PC-9 (cell line): ENCODE measurements at regions of chr10 and their contacts with region 1.

Region 1: GRCh38 chr10:97714048-97714371 is 480 bp downstream of the MARVELD1 start:
- DNase-seq: peak in 1 of 2 experiments; percentile 46
- H3K4me3 ChIP-seq: peak overlapping the region; percentile 67
- H3K27ac ChIP-seq: peak overlapping the region; percentile 54
- H3K4me1 ChIP-seq: peaks cover 46% of the 10 kb centered on the region
- H3K27me3 ChIP-seq: no peaks in the 10 kb centered on the region
- CTCF ChIP-seq: no peak

Region 2: DNA sequence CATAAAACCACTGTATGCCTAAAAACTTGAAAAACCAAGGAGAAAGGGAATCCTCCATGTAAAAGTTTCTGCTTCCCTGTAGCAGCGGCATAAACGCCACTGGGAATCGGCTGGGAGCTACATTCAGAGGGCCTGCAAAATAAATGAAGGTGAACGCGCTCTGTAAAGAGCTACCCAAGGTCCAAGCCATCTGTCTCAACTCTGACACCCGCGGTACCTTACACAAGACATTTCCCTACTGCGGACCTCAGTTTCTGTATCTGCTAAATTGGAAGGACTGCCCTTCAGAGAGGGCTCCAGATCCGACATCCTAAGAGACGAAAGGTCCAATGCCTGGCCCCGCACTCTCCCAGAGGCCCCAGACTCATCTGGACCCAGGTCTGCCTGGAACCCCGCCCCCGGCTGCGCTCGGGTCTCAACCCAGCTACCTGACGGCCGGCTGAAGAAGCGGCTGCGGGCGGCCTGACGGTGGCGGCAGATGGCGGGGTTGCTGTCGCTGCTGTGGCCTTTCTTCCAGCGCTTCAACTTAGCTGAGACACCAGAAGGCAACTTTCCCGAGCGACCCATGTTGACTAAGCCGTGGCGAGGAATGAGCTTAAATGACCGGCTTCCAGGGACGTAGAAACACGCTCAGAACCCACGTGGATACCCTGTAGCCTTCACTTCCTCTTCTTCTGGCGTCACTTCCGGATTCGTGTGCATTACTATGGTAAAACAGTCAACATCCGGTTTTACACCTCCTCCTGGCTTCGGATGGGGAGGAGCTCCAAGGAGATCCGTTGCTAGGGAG is 313.1 kb before region 1 on chr10 and contains the start of gene RRP12:
- CTCF ChIA-PET with region 1: no interaction called
- POLR2A ChIA-PET with region 1: no interaction called
- intact Hi-C with region 1: loop called (anchors 10 kb)
- DNase-seq: peak; percentile 71 to 92
- H3K4me3 ChIP-seq: peak within 1 kb of the TSS; percentile 97
- H3K27ac ChIP-seq: peak within 1 kb of the TSS; percentile 61
- H3K4me1 ChIP-seq: no peaks in the 10 kb centered on the region
- H3K27me3 ChIP-seq: no peaks in the 10 kb centered on the region
- CTCF ChIP-seq: no peak
- total RNA-seq, gene RRP12: 22.6 and 34.3 TPM in 2 replicates

Region 3: DNA sequence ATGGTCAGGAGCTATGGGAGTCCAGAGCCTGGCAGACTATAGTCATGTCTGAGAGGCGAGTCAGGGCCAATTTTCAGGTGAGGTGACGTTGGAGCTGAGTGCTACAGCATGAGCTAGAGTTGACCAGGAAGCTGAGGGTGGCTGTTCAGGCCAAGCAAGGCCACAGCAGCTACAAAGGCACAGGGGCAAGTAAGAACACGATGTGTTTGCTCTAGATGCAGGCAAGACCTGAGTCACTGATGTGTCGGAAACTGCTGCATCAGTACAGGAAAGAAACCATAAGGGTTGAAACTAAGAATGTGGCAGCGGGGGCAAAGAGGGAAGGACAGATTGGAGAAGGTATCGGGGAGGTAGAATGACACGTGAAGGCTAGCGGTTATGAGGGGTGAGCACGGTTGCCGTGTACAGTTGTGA is 301.1 kb before region 1 on chr10:
- CTCF ChIA-PET with region 1: no interaction called
- POLR2A ChIA-PET with region 1: interaction called, 27 read pairs
- intact Hi-C with region 1: loop called (anchors 10 kb)
- DNase-seq: peak; percentile 47 to 81
- H3K4me3 ChIP-seq: no peak overlapping the region
- H3K27ac ChIP-seq: peak overlapping the region; percentile 50
- H3K4me1 ChIP-seq: peaks cover 10% of the 10 kb centered on the region
- H3K27me3 ChIP-seq: no peaks in the 10 kb centered on the region
- CTCF ChIP-seq: no peak

Region 4: GRCh38 chr10:97632949-97633884 is 80.8 kb before region 1 on chr10 and contains the start of gene MORN4:
- CTCF ChIA-PET with region 1: no interaction called
- POLR2A ChIA-PET with region 1: no interaction called
- intact Hi-C with region 1: no loop called
- DNase-seq: peak; percentile 72 to 84
- H3K4me3 ChIP-seq: peak within 1 kb of the TSS; percentile 83
- H3K27ac ChIP-seq: no peak within 1 kb of the TSS
- H3K4me1 ChIP-seq: no peaks in the 10 kb centered on the region
- H3K27me3 ChIP-seq: no peaks in the 10 kb centered on the region
- CTCF ChIP-seq: no peak
- total RNA-seq, gene MORN4: 10.0 and 10.6 TPM in 2 replicates

Region 5: GRCh38 chr10:97686962-97687784 is 26.8 kb before region 1 on chr10 and contains the start of gene AVPI1:
- CTCF ChIA-PET with region 1: interaction called, 3 read pairs
- POLR2A ChIA-PET with region 1: interaction called, 7 read pairs
- intact Hi-C with region 1: loop called (anchors 2 kb)
- DNase-seq: peak; percentile 91 to 97
- H3K4me3 ChIP-seq: peak within 1 kb of the TSS; percentile 81
- H3K27ac ChIP-seq: peak within 1 kb of the TSS; percentile 71
- H3K4me1 ChIP-seq: peaks cover 54% of the 10 kb centered on the region
- H3K27me3 ChIP-seq: no peaks in the 10 kb centered on the region
- CTCF ChIP-seq: no peak
- total RNA-seq, gene AVPI1: 20.5 and 22.4 TPM in 2 replicates

Region 6: GRCh38 chr10:97701438-97702069 is 12.5 kb before region 1 on chr10:
- CTCF ChIA-PET with region 1: interaction called, 26 read pairs
- POLR2A ChIA-PET with region 1: interaction called, 3 read pairs
- intact Hi-C with region 1: no loop called
- DNase-seq: peak in 1 of 2 experiments; percentile 29
- H3K4me3 ChIP-seq: no peak overlapping the region
- H3K27ac ChIP-seq: no peak overlapping the region
- H3K4me1 ChIP-seq: no peaks in the 10 kb centered on the region
- H3K27me3 ChIP-seq: no peaks in the 10 kb centered on the region
- CTCF ChIP-seq: peak; percentile 74

Region 7: DNA sequence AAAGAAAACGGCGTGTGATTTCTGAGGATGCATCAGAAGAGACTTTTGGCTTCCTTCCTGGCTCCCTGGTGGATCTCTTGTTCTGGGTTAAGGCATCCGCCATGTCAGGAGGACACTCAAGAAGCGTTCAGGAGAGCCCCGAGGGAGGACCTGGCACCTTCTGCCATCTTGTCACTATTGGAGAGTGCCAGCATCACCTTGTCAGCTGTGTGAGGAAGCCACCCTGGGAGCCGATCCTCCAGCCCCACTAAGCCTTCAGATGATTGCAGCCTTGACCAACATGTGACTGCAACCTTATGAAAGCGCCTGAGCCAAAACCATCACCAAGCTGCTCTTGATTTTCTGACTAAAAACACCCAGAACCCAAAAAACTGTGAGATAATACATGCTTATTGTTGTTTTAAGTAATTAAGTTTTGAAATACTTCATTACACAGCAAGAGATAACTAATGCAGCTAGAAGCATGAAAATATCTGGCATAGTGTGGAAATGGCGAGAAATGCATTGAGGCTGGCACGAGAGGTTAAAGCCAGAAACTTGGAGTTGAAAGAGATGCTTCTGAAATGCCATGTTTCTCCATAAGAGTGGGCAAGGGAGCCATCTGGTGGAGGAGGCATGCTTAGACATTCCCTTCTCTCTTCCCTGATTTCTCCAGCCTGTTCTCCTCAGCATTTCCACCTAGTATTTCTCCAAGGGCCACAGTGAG is 17.5 kb after region 1 on chr10:
- CTCF ChIA-PET with region 1: interaction called, 3 read pairs
- POLR2A ChIA-PET with region 1: interaction called, 3 read pairs
- intact Hi-C with region 1: loop called (anchors 1 kb)
- DNase-seq: peak in 1 of 2 experiments; percentile 55
- H3K4me3 ChIP-seq: no peak overlapping the region
- H3K27ac ChIP-seq: no peak overlapping the region
- H3K4me1 ChIP-seq: peaks cover 6% of the 10 kb centered on the region
- H3K27me3 ChIP-seq: no peaks in the 10 kb centered on the region
- CTCF ChIP-seq: peak; percentile 78

Region 8: DNA sequence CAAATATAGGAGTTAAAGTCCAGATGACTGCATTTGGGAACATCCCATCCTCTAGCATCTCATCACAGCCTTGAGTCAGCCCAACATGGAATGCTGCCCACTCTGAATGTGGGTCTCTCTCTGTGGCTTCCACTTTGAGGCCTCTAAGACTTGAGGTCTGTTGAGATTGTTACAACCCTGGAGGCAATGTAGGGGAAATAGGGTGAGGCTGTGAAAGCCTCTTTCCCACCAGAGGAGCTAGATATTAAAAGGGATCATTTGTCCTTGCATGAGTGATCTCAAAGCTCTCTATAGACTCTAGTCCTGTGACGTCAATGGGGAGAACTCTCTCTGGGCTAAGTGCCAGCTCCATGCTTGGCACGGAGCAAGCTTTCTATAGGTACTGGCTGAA is 129.3 kb after region 1 on chr10:
- CTCF ChIA-PET with region 1: no interaction called
- POLR2A ChIA-PET with region 1: interaction called, 10 read pairs
- intact Hi-C with region 1: no loop called
- DNase-seq: no peak
- H3K4me3 ChIP-seq: no peak overlapping the region
- H3K27ac ChIP-seq: no peak overlapping the region
- H3K4me1 ChIP-seq: peaks cover 15% of the 10 kb centered on the region
- H3K27me3 ChIP-seq: no peaks in the 10 kb centered on the region
- CTCF ChIP-seq: no peak

Region 9: GRCh38 chr10:99470327-99470726 is 1756.3 kb after region 1 on chr10:
- CTCF ChIA-PET with region 1: no interaction called
- POLR2A ChIA-PET with region 1: no interaction called
- intact Hi-C with region 1: no loop called
- DNase-seq: no peak
- H3K4me3 ChIP-seq: no peak overlapping the region
- H3K27ac ChIP-seq: no peak overlapping the region
- H3K4me1 ChIP-seq: no peaks in the 10 kb centered on the region
- H3K27me3 ChIP-seq: no peaks in the 10 kb centered on the region
- CTCF ChIP-seq: no peak